Prostate gland (tissue), 2 donors: ENCODE measurements at regions of chr20 and their contacts with region 1.

Region 1: DNA sequence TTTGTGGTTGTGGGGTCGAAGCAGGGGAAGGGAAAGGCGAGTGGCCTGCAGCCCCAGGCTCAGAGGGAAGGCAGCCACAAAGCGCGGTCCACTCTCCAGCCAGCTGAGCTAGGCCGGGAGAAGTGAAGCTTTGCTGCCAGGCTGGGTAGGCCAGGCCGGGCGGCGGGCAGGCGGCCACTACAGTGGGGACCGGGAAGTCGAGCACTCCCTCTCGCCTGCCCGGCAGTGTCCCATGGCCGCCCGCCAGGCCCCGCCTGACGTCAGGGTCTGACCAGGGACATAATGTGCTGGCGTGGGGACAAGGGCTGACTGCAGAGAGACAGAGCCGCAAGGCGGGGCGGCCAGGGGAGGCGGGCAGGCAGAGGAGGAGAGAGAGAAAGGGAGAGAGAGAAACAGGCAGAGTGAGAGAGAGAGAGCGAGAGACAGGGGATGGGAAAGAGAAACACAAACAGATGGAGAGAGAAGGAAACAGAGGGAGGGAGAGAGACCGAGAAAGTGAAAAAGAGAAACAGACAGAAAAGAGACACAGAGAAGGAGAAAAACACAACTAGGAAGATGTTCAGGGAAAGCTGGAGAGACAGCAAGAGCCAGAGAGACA is 94.6 kb upstream of the PTPN1 start:
- DNase-seq: peak; percentile 100
- H3K4me3 ChIP-seq: no peak overlapping the region
- H3K27ac ChIP-seq: peak overlapping the region; percentile 97 to 98
- H3K4me1 ChIP-seq: peaks cover 14% of the 10 kb centered on the region
- H3K27me3 ChIP-seq: no peaks in the 10 kb centered on the region
- CTCF ChIP-seq: peak in 1 of 4 experiments; percentile 34
- POLR2A ChIP-seq: peak; percentile 82

Region 2: GRCh38 chr20:50242853-50243609 is 172.6 kb before region 1 on chr20:
- intact Hi-C with region 1: no loop called
- DNase-seq: peak; percentile 44
- H3K4me3 ChIP-seq: no peak overlapping the region
- H3K27ac ChIP-seq: no peak overlapping the region
- H3K4me1 ChIP-seq: peaks cover 11% of the 10 kb centered on the region
- H3K27me3 ChIP-seq: no peaks in the 10 kb centered on the region
- CTCF ChIP-seq: no peak
- POLR2A ChIP-seq: no peak

Region 3: GRCh38 chr20:50395258-50395729 is 20.3 kb before region 1 on chr20:
- intact Hi-C with region 1: loop called (anchors 1 kb)
- DNase-seq: peak; percentile 55
- H3K4me3 ChIP-seq: no peak overlapping the region
- H3K27ac ChIP-seq: peak overlapping the region; percentile 69 to 76
- H3K4me1 ChIP-seq: peaks cover 8% of the 10 kb centered on the region
- H3K27me3 ChIP-seq: no peaks in the 10 kb centered on the region
- CTCF ChIP-seq: no peak
- POLR2A ChIP-seq: no peak